Mammary epithelial cell (primary cell): ENCODE measurements at regions of chr12 and their contacts with region 1.

Region 1: DNA sequence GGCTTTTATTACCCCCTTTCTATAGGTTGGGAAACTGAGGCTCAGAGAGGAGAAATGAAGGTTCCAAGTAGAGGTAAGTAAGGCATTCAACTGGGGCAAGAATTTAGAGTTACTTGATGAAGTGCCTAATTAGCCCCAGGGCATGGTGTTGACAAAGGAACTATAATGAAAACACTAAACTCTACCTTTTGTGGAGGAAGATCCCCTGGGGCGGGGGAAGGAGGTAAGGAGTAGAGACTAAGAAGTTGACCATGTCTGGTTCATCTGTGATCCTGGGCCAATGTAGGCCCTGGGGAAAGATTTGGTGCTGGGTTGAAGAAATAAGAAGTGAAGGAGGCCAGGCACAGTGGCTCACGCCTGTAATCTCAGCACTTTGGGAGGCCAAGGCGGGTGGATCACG is 16.2 kb upstream of the COX6A1 start:
- DNase-seq: no peak
- H3K4me3 ChIP-seq: no peak overlapping the region
- H3K27ac ChIP-seq: no peak overlapping the region
- H3K4me1 ChIP-seq: no peaks in the 10 kb centered on the region
- H3K27me3 ChIP-seq: no peaks in the 10 kb centered on the region
- CTCF ChIP-seq: no peak

Region 2: DNA sequence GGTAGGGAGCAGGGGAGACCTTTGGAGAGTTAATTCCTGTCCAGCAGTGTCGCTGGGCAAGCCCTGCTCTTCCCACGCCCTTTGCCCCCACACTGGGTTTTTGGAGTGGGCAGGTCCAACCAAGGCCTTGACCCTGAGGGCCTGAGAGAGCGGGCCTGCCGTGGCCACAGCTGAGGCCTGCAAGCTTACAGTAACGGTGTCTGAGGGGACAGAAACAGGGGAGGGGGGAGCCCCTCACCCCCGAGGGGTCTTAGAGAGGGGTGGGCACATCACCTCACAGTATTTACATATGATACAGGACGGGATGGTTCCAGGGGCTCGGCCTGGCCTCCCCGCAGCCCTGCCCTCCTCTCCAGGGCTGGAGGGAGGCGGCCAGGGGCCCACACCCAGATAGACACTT is 79.5 kb before region 1 on chr12:
- CTCF ChIA-PET with region 1: no interaction called
- dilution Hi-C with region 1: loop called (anchors 5 kb)
- in situ Hi-C with region 1: no loop called
- intact Hi-C with region 1: no loop called
- DNase-seq: no peak
- H3K4me3 ChIP-seq: no peak overlapping the region
- H3K27ac ChIP-seq: no peak overlapping the region
- H3K4me1 ChIP-seq: no peaks in the 10 kb centered on the region
- H3K27me3 ChIP-seq: no peaks in the 10 kb centered on the region
- CTCF ChIP-seq: no peak

Region 3: DNA sequence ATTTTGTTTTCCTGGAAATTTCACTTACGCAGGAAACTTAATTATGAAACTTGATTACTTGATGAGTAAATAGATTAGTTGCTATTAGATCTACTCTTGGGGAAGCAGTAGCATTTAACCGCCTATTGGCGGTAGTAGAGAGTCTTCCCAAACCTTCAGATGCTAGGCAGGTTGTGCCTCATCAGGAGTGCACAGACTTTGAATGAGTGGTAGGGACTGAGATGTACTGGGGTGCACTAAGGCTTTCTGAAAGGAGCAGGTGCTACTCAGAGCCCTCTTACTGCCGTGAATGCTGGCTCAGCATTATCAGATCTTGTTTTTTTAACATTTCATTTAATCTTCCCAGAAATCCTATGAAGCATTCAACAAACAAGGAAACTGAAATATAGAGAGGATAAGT is 32.3 kb after region 1 on chr12:
- CTCF ChIA-PET with region 1: no interaction called
- dilution Hi-C with region 1: no loop called
- in situ Hi-C with region 1: no loop called
- intact Hi-C with region 1: no loop called
- DNase-seq: peak; percentile 18
- H3K4me3 ChIP-seq: no peak overlapping the region
- H3K27ac ChIP-seq: no peak overlapping the region
- H3K4me1 ChIP-seq: no peaks in the 10 kb centered on the region
- H3K27me3 ChIP-seq: no peaks in the 10 kb centered on the region
- CTCF ChIP-seq: peak; percentile 71 to 82

Region 4: DNA sequence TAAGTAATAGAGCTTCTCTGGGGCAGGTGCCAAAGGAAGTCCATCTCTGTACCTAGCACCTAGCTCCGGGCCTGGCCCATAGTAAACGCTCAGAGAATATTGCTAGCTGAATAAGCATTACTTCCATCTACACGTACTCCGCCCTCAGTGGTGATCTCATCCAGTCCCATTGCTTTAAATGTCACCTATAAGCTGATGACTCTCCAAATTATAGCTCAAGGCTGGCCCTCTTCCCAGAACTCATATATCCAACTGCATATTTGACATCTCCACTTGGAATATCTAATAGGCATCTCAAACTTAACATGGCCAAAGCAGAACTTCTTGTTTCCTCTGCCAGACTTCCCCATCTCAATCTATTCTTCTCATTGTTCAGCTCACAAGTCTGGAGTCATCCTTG is 67.3 kb after region 1 on chr12:
- CTCF ChIA-PET with region 1: no interaction called
- dilution Hi-C with region 1: loop called (anchors 5 kb)
- in situ Hi-C with region 1: no loop called
- intact Hi-C with region 1: no loop called
- DNase-seq: no peak
- H3K4me3 ChIP-seq: no peak overlapping the region
- H3K27ac ChIP-seq: no peak overlapping the region
- H3K4me1 ChIP-seq: no peaks in the 10 kb centered on the region
- H3K27me3 ChIP-seq: no peaks in the 10 kb centered on the region
- CTCF ChIP-seq: no peak